Activated T-helper 1 cell treated with anti-CD3 and anti-CD28 coated beads, Interleukin-12 subunit alpha, Interleukin-12 subunit beta, Interleukin-2, Interleukin-4 antibody, amounts not matched to agents 30 ng/mL and 10 ng/mL and 1 ng/mL, durations not matched to agents 14 hours and 24 hours and 36 hours (primary cell): ENCODE measurements at regions of chrX and their contacts with region 1.

Region 1: GRCh38 chrX:107672955-107673378 is 44.7 kb downstream of the PRPS1 start:
- DNase-seq: peak; percentile 70
- H3K4me3 Mint-ChIP-seq: peak overlapping the region; percentile 53
- H3K27ac Mint-ChIP-seq: peak overlapping the region; percentile 99
- H3K4me1 Mint-ChIP-seq: peaks cover 46% of the 10 kb centered on the region
- H3K27me3 Mint-ChIP-seq: no peaks in the 10 kb centered on the region

Region 2: GRCh38 chrX:107710617-107711391 is 37.8 kb after region 1 on chrX:
- intact Hi-C with region 1: loop called (anchors 1 kb)
- DNase-seq: peak; percentile 65
- H3K4me3 Mint-ChIP-seq: peak overlapping the region; percentile 79
- H3K27ac Mint-ChIP-seq: peak overlapping the region; percentile 99
- H3K4me1 Mint-ChIP-seq: peaks cover 43% of the 10 kb centered on the region
- H3K27me3 Mint-ChIP-seq: no peaks in the 10 kb centered on the region

Region 3: DNA sequence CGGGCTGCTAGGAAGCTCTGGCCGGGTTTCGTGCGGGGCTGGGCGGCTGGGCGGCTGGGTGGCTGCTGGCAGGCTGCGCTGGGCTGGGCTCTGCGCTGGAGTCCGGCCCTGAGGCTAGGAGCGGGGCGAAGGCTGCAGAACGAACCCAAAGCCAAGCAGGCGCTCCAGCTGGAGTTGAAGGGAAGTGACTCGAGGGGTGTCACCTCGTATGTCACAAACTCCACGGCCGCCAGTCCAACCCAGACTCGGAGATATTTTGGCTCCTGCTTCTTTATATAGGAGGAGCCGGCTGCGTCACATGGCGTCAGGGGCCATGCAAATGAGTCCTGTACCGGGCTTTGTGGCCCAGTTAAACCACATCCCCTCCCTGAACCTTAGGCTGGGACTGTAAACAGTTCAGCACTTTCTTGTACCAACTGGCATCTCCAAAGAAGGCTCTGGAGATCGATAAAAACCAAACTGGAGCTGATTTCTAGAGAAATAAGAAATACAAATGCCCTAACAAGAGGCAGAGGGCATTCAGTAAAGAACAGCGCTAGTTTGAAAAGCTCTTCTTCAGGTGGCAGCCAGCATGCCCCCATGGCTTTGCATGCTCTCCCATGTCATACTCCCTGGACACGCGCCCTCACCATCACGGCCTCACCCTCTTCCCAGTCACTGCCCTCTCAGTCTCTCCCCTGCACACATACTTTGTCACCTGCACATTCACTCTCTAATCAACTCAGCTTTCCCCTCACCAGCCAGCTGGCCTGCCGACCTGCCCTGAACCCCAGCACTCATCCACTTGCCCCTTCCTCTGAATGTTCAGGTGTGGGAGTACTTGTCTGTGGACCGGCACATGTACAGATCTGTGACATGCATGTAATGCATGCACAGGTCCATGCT is 44.1 kb after region 1 on chrX:
- intact Hi-C with region 1: loop called (anchors 1 kb)
- DNase-seq: peak; percentile 84
- H3K4me3 Mint-ChIP-seq: peak overlapping the region; percentile 93
- H3K27ac Mint-ChIP-seq: peak overlapping the region; percentile 87
- H3K4me1 Mint-ChIP-seq: peaks cover 46% of the 10 kb centered on the region
- H3K27me3 Mint-ChIP-seq: no peaks in the 10 kb centered on the region

Region 4: GRCh38 chrX:107742700-107743191 is 69.8 kb after region 1 on chrX:
- intact Hi-C with region 1: loop called (anchors 1 kb)
- DNase-seq: no peak
- H3K4me3 Mint-ChIP-seq: peak overlapping the region; percentile 66
- H3K27ac Mint-ChIP-seq: peak overlapping the region; percentile 97
- H3K4me1 Mint-ChIP-seq: peaks cover 14% of the 10 kb centered on the region
- H3K27me3 Mint-ChIP-seq: peaks cover 2% of the 10 kb centered on the region

Region 5: DNA sequence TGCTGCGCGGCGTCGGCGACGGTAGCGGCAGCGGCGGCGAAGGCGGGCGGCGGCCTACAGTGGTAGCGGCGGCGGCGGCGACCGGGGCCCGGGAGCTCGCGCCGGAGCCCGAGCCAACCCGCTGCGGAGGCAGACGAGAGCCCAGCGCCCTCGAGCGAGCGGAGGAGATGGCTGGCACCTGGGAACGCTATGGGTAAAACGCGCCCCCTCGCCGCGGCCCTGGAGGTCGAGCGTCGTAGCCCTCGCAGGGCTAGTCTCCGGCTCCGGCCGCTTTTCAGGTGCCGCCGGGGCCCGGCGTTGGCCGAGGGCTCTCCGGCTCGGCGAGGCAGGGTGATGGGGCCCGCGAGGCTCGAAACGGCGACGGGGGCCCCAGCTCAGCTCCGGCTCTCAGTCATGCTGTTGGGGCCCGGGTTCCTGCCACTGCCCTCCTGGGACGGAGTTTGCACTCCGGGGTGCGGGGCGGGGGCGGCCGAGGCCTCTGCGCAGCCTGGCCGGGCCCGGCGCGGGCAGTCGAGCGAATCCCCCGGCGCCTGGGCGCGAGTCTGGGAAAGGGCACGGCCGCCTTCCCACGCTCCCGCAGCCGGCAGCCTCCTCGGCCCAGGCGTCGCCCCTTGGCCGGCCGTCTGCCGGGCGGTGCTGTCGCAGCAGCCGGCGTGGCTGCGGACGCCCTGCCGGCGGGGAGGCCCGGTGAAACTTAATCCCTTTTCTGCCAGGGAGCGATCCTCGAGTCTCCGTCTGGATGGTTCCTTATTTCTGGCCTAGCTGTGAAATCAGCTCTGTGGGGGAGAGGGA is 153.5 kb after region 1 on chrX:
- intact Hi-C with region 1: loop called (anchors 5 kb)
- DNase-seq: peak; percentile 1
- H3K4me3 Mint-ChIP-seq: peak overlapping the region; percentile 83
- H3K27ac Mint-ChIP-seq: peak overlapping the region; percentile 86
- H3K4me1 Mint-ChIP-seq: peaks cover 34% of the 10 kb centered on the region
- H3K27me3 Mint-ChIP-seq: peaks cover 8% of the 10 kb centered on the region